CD4-positive, alpha-beta memory T cell (primary cell): ENCODE measurements at regions of chr9 and their contacts with region 1.

Region 1: DNA sequence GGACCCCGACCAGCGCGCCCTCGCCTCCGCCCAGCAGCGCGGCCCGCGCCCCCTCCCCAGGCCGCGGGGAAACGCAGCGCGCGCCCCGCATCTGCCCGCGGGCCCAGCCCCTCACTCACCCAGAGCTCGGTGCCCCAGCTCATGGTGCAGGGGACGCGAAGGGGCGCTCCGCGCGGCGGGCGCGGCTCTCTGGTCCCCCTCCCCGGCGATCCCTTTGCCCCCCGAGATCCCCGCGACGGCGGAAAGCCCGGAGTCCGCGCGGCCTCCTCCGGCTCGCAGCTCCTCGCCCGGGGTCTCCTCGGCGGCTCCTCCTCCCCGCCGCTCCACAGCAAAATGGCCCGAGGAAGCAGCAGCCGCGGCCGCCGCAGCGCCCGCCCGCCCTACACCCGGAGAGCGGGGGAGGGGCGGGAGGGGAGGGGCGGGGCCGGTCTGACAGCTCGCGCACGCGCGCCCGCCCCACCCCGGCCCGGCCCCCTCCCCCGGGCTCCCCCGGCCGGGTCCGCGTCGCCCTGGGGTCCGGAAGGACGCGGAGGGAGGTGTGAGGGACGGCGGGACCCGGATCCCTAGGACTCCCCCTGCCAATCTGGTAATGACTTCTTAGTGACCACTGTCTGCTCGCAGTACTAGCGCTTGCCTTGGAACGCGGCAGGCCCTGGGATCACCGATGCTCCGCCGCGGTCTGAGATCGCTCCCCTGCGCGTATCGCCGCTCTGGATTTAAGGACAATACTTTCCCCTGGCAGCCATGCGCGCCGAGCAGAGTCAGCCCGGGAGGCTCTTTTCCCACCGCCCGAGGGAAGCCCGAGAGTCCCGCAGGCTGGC is at the start of gene FNBP1:
- DNase-seq: peak; percentile 82 to 88 (median 84)
- H3K4me3 ChIP-seq: peak within 1 kb of the TSS; percentile 89
- H3K4me3 Mint-ChIP-seq: peak within 1 kb of the TSS; percentile 98 to 100 (median 99)
- H3K27ac ChIP-seq: peak within 1 kb of the TSS; percentile 95
- H3K27ac Mint-ChIP-seq: peak within 1 kb of the TSS; percentile 96 to 99 (median 99)
- H3K4me1 ChIP-seq: peaks cover 41% of the 10 kb centered on the region
- H3K4me1 Mint-ChIP-seq: peaks cover 32 to 69% (median 43%) of the 10 kb centered on the region in 4 donors
- H3K27me3 ChIP-seq: no peaks in the 10 kb centered on the region
- H3K27me3 Mint-ChIP-seq: no peaks in the 10 kb centered on the region
- total RNA-seq, gene FNBP1: 197 to 202 TPM

Region 2: DNA sequence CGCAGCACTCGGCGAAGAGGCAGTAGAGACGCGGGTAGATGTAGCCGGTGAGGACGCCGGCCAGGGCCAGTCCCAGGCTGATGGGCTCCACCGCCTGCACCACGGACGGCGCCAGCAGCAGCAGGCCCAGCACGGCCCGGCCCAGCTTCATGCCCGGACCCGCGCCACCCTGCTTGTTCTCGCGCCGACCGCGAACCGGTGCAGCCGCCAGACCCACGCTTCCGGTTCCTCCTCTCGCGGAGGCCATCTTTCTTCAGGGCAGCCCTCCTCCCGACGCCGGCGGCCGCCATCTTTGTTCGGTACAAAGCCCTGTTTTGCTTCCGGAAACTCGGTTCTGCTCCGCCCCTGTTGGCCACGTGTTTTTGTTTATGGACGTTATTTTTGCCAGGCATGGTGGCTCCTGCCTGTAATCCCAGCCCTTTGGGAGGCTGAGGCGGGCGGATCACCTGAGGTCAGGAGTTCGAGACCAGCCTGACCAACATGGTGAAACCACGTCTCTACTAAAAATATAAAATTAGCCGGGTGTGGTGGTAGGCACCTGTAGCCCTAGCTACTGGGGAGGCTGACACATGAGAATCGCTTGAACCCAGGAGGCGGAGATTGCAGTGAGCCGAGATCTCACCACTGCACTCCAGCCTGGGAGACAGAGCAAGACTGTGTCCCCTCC is 219.0 kb before region 1 on chr9 and contains the start of gene TOR1A:
- CTCF ChIA-PET with region 1: interaction called, 3 read pairs
- POLR2A ChIA-PET with region 1: interaction called, 6 read pairs
- intact Hi-C with region 1: loop called (anchors 1 kb)
- DNase-seq: peak; percentile 89 to 95 (median 90)
- H3K4me3 ChIP-seq: peak within 1 kb of the TSS; percentile 24 to 73
- H3K4me3 Mint-ChIP-seq: peak within 1 kb of the TSS; percentile 84 to 91 (median 88)
- H3K27ac ChIP-seq: peak within 1 kb of the TSS; percentile 62
- H3K27ac Mint-ChIP-seq: peak within 1 kb of the TSS; percentile 73 to 95 (median 88)
- H3K4me1 ChIP-seq: peaks cover 8% of the 10 kb centered on the region
- H3K4me1 Mint-ChIP-seq: peaks cover 8 to 18% (median 13%) of the 10 kb centered on the region in 4 donors
- H3K27me3 ChIP-seq: no peaks in the 10 kb centered on the region
- H3K27me3 Mint-ChIP-seq: no peaks in the 10 kb centered on the region
- total RNA-seq, gene TOR1A: 39.8 to 41.9 TPM

Region 3: GRCh38 chr9:129932303-129933151 is 110.5 kb before region 1 on chr9:
- CTCF ChIA-PET with region 1: interaction called, 3 read pairs
- POLR2A ChIA-PET with region 1: interaction called, 31 read pairs
- intact Hi-C with region 1: no loop called
- DNase-seq: peak in 1 of 5 donors; percentile 15
- H3K4me3 ChIP-seq: peak overlapping the region in 1 of 2 donors; percentile 3
- H3K4me3 Mint-ChIP-seq: peak overlapping the region; percentile 71 to 86 (median 75)
- H3K27ac ChIP-seq: peak overlapping the region; percentile 66
- H3K27ac Mint-ChIP-seq: peak overlapping the region; percentile 89 to 96 (median 91)
- H3K4me1 ChIP-seq: peaks cover 59% of the 10 kb centered on the region
- H3K4me1 Mint-ChIP-seq: peaks cover 38 to 73% (median 56%) of the 10 kb centered on the region in 4 donors
- H3K27me3 ChIP-seq: no peaks in the 10 kb centered on the region
- H3K27me3 Mint-ChIP-seq: no peaks in the 10 kb centered on the region

Region 4: DNA sequence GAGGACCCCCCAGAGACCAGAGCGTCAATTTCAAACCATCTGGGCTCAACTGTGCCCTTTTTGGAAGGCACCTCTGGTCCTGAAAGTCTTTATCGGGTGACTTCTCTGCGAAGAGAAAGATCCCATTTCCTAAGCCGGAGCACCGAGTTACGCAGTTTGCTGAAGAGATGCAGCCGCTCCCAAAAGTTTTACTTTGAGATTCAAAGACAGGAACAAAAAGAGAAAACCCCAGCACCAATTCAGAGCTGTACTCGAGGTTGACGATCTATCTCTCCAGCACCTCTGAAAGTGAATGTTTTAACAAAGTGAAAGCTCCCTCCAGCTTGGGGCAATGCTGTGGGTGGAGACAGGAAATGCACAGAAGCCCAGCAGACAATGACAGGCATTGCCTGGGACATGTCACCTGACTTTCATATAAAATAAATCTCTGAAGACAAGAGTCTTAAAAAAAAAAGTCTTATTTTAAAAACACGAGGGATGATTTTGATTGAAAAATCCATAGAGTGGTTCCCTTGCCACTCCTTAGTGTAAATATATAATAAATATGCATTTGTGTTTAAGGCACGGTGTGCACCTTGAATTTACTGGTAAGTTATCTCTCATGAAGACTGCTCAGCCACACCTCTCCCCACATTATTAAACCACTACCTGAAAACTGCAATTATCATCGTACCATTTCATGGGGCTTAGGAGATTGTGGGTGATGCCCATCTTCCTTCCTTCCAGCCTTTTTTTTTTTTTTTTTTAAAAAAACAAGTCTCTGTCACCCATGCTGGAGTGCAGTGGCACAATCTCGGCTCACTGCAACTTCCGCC is 79.9 kb before region 1 on chr9:
- CTCF ChIA-PET with region 1: interaction called, 7 read pairs
- POLR2A ChIA-PET with region 1: interaction called, 125 read pairs
- intact Hi-C with region 1: loop called (anchors 1 kb)
- DNase-seq: peak; percentile 85 to 94 (median 88)
- H3K4me3 ChIP-seq: peak overlapping the region; percentile 64 to 67
- H3K4me3 Mint-ChIP-seq: peak overlapping the region; percentile 75 to 92 (median 87)
- H3K27ac ChIP-seq: peak overlapping the region; percentile 90
- H3K27ac Mint-ChIP-seq: peak overlapping the region; percentile 95 to 99 (median 98)
- H3K4me1 ChIP-seq: peaks cover 55% of the 10 kb centered on the region
- H3K4me1 Mint-ChIP-seq: peaks cover 45 to 82% (median 66%) of the 10 kb centered on the region in 4 donors
- H3K27me3 ChIP-seq: no peaks in the 10 kb centered on the region
- H3K27me3 Mint-ChIP-seq: no peaks in the 10 kb centered on the region

Region 5: GRCh38 chr9:129995409-129996160 is 47.5 kb before region 1 on chr9:
- CTCF ChIA-PET with region 1: interaction called, 10 read pairs
- POLR2A ChIA-PET with region 1: interaction called, 21 read pairs
- intact Hi-C with region 1: loop called (anchors 5 kb)
- DNase-seq: peak in 2 of 5 donors; percentile 20 to 59
- H3K4me3 ChIP-seq: peak overlapping the region in 1 of 2 donors; percentile 15
- H3K4me3 Mint-ChIP-seq: peak overlapping the region; percentile 66 to 82 (median 76)
- H3K27ac ChIP-seq: peak overlapping the region; percentile 64
- H3K27ac Mint-ChIP-seq: peak overlapping the region; percentile 93 to 98 (median 96)
- H3K4me1 ChIP-seq: peaks cover 79% of the 10 kb centered on the region
- H3K4me1 Mint-ChIP-seq: peaks cover 55 to 87% (median 71%) of the 10 kb centered on the region in 4 donors
- H3K27me3 ChIP-seq: no peaks in the 10 kb centered on the region
- H3K27me3 Mint-ChIP-seq: no peaks in the 10 kb centered on the region

Region 6: DNA sequence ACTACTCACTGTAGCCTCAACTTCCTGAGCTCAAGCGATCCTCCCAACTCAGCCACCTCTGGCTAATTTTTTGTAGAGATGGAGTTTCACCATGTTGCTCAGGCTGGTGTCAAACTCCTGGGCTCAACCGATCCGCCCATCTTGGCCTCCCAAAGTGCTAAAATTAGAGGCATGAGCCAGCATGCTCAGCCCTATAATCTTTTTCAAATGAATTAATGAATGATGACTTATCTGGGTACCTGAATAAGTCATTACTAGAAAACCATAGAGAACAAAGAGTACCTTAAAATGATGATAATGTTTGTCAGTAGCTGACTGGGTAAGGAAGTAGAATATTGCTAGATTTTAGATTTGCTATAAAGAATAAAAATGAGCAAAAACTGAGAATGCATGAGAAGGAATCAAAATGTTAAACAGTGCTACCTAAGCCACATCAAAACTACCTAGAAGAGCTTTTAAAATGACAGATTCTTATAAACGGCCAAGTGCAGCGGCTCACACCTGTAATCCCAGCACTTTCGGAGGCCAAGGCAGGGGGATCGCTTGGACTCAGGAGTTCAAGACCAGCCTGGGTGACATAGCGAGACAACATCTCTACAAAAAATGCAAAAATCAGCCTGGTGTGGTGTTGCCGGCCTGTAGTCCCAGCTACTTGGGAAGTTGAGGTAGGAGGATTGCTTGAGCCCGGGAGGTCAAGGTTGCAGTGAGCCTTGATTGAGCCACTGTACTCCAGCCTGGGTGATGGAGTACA is 13.6 kb before region 1 on chr9:
- CTCF ChIA-PET with region 1: interaction called, 8 read pairs
- POLR2A ChIA-PET with region 1: interaction called, 83 read pairs
- intact Hi-C with region 1: no loop called
- DNase-seq: no peak
- H3K4me3 ChIP-seq: no peak overlapping the region
- H3K4me3 Mint-ChIP-seq: peak overlapping the region; percentile 68 to 79 (median 72)
- H3K27ac ChIP-seq: peak overlapping the region; percentile 77
- H3K27ac Mint-ChIP-seq: peak overlapping the region; percentile 58 to 99 (median 91)
- H3K4me1 ChIP-seq: peaks cover 94% of the 10 kb centered on the region
- H3K4me1 Mint-ChIP-seq: peaks cover 68 to 96% (median 82%) of the 10 kb centered on the region in 4 donors
- H3K27me3 ChIP-seq: no peaks in the 10 kb centered on the region
- H3K27me3 Mint-ChIP-seq: no peaks in the 10 kb centered on the region

Region 7: GRCh38 chr9:130078547-130078946 is 35.5 kb after region 1 on chr9:
- CTCF ChIA-PET with region 1: no interaction called
- POLR2A ChIA-PET with region 1: no interaction called
- intact Hi-C with region 1: no loop called
- DNase-seq: no peak
- H3K4me3 ChIP-seq: no peak overlapping the region
- H3K4me3 Mint-ChIP-seq: no peak overlapping the region
- H3K27ac ChIP-seq: no peak overlapping the region
- H3K27ac Mint-ChIP-seq: peak overlapping the region in 2 of 7 donors; percentile 13 to 70
- H3K4me1 ChIP-seq: no peaks in the 10 kb centered on the region
- H3K4me1 Mint-ChIP-seq: peaks cover 5 to 13% (median 12%) of the 10 kb centered on the region in 4 donors
- H3K27me3 ChIP-seq: no peaks in the 10 kb centered on the region
- H3K27me3 Mint-ChIP-seq: no peaks in the 10 kb centered on the region

Region 8: GRCh38 chr9:130118841-130119518 is 75.9 kb after region 1 on chr9:
- CTCF ChIA-PET with region 1: no interaction called
- POLR2A ChIA-PET with region 1: no interaction called
- intact Hi-C with region 1: no loop called
- DNase-seq: no peak
- H3K4me3 ChIP-seq: no peak overlapping the region
- H3K4me3 Mint-ChIP-seq: no peak overlapping the region
- H3K27ac ChIP-seq: no peak overlapping the region
- H3K27ac Mint-ChIP-seq: no peak overlapping the region
- H3K4me1 ChIP-seq: no peaks in the 10 kb centered on the region
- H3K4me1 Mint-ChIP-seq: peaks cover 0 to 2% (median 0%) of the 10 kb centered on the region in 4 donors
- H3K27me3 ChIP-seq: no peaks in the 10 kb centered on the region
- H3K27me3 Mint-ChIP-seq: no peaks in the 10 kb centered on the region

Region 9: GRCh38 chr9:130654879-130655278 is 611.8 kb after region 1 on chr9:
- CTCF ChIA-PET with region 1: no interaction called
- POLR2A ChIA-PET with region 1: no interaction called
- intact Hi-C with region 1: no loop called
- DNase-seq: no peak
- H3K4me3 ChIP-seq: no peak overlapping the region
- H3K4me3 Mint-ChIP-seq: no peak overlapping the region
- H3K27ac ChIP-seq: no peak overlapping the region
- H3K27ac Mint-ChIP-seq: no peak overlapping the region
- H3K4me1 ChIP-seq: no peaks in the 10 kb centered on the region
- H3K4me1 Mint-ChIP-seq: peaks cover 0 to 8% (median 4%) of the 10 kb centered on the region in 4 donors
- H3K27me3 ChIP-seq: no peaks in the 10 kb centered on the region
- H3K27me3 Mint-ChIP-seq: peaks cover 28 to 37% of the 10 kb centered on the region in 2 donors